Left cardiac atrium (tissue), 4 donors: ENCODE measurements at regions of chr1 and their contacts with region 1.

Region 1: DNA sequence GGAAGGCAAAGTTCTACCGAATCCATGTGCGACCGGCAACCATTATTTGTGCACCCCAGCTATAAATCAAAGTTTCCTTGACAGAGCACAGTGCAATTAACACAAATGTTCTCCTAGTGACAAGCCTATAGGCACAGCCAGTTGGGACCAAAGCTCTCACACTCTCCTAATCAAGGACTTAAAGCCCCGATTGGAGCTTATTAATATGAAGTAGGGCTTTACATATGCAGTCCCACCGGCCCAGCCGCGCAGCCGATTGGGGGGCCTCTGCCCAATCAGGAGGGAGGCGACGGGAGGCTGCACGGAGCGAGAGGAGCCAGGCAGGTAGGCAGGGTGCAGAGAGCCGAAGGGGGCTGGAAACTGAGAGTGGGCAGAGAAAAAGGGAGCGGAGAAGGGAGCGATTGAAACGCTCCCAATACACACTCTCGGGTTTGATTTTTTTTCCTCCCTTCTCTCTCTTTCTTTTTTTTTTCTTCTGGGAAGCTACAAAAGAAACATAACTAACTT is at the start of gene ESRRG:
- DNase-seq: peak; percentile 60
- ATAC-seq: peak; percentile 90 to 97
- total RNA-seq, gene ESRRG: 17.5 to 29.5 TPM

Region 2: DNA sequence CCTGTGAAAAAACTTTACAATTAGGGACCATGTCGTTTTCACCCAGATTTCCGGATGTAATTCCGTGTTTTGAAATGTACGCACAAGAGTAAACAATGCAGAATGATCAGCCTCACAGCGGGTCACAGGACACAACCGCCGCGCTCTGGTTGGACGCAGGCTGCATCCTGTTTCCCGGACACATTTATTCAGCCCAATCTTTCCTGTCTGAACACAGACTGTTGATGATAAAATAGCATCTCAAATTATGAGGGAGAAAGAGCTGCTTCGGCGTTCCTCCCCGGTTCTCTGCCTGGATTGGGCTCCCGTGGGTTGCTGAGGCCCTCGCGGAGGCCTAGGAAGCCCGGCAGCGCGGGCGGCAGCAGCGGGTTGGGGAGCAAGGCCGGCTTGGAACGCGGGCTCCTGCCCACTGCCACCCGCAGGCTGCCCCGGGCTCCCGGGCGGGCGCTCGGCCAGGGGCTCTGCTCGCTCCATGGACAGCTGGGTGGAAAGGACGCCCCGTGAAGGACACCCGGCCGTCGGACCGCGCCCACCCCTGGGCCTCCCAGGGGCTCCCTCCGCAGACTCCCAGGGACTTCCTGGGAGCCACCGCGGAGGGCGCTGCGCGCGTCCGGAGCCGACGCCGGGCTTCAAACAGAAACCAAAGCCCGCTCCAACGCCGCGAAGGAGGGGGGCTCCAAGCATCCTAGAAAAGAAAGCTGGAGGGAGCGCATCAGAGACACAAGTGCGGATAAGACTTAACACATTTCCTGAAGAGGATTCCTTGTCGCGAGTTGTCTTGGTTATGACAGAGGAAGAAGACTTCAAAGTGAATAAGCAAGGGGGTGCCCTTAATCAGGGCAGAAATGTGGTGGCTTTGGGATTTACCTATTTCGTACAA is 122.4 kb before region 1 on chr1:
- intact Hi-C with region 1: loop called in 1 of 2 experiments (anchors 5 kb)
- DNase-seq: peak; percentile 77
- ATAC-seq: peak; percentile 95 to 98

Region 3: GRCh38 chr1:216778737-216779136 is 55.4 kb after region 1 on chr1:
- intact Hi-C with region 1: no loop called
- DNase-seq: no peak
- ATAC-seq: no peak

Region 4: DNA sequence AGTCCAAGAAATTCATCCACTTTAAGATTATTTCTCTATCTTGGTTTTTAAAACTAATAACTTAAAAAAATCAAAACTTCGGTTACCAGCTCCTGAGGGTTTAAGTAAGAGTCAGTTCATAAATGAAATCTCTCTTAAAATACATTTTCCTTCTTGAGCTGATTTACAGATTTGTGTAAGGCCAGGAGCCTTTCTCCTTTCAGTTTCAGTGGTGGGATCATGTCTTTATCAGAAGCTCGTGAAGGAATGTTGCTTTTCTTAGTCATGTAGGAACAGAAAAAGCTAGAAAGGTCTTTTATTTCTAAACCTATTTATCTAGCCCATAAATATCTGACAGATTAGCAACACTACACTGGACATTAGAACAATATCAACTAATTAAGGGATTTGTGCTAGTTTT is 517.3 kb after region 1 on chr1:
- intact Hi-C with region 1: no loop called
- DNase-seq: no peak
- ATAC-seq: no peak